HepG2 (cell line): ENCODE measurements at regions of chr15 and their contacts with region 1.

Region 1: DNA sequence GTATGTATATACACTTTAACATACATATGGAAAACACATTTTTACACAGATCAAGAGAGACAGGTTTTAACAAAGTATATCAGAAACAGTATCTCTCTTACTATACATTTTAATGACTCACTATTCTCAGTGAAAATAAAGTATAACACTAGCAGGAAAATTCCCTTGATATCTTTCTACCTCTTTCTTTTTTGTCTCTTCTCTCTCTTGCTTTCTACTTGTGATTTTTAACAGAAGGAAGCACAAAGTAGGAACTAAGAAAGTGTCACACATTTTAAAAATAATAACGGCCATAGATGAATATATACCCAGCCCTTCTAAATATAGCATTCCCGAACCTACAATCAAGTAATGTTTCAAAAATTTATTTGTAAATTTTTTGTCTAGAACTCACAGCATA is 4.8 kb downstream of the DENND4A start:
- DNase-seq: no peak
- ATAC-seq: no peak
- H3K4me3 ChIP-seq: peak overlapping the region in 1 of 3 experiments; percentile 7; a peak in 2 of 6 replicates
- H3K27ac ChIP-seq: peak overlapping the region; percentile 72
- H3K4me1 ChIP-seq: peaks cover 48% of the 10 kb centered on the region
- H3K27me3 ChIP-seq: no peaks in the 10 kb centered on the region; a peak in 1 of 5 replicates
- CTCF ChIP-seq: no peak
- EP300 ChIP-seq: no peak
- POLR2A ChIP-seq: no peak
- RAD21 ChIP-seq: no peak

Region 2: DNA sequence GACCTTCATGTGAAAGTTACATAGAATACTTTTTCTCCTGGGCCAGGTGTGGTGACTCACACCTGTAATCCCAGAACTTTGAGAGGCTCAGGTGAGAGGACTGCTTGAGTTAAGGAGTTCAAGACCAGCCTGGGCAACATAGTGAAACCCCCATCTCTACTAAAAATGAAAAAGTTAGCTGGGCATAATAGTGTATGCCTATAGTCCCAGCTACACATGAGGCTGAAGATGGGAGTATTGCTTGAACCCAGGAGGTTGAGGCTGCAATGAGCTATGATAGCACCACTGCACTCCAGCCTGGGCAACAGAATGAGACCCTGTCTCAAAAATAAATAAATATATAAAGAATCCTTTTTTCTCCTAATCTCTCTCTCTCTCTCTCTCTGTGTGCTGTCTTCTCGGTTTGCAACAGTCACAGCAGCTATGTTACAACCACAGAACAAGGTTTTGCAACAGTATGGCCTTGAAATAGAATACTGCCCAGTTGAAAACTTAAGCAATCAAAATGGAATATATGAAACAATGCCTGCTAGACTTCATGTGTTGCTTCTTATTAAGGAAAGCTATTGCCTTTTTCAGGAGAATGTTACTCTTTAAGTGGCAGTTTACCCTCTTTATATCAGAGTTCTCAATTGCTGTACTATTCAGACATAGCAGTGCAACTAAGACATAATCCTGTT is 17.1 kb after region 1 on chr15:
- CTCF ChIA-PET with region 1: no interaction called
- POLR2A ChIA-PET with region 1: interaction called, 7 read pairs
- in situ Hi-C with region 1: no loop called
- intact Hi-C with region 1: loop called (anchors 1 kb)
- DNase-seq: peak; percentile 91
- ATAC-seq: peak; percentile 94
- H3K4me3 ChIP-seq: peak overlapping the region in 1 of 3 experiments; percentile 21; a peak in 1 of 6 replicates
- H3K27ac ChIP-seq: peak overlapping the region; percentile 64
- H3K4me1 ChIP-seq: peaks cover 55% of the 10 kb centered on the region
- H3K27me3 ChIP-seq: no peaks in the 10 kb centered on the region
- CTCF ChIP-seq: no peak
- EP300 ChIP-seq: peak; percentile 57 to 83; a peak in 3 of 4 replicates
- POLR2A ChIP-seq: no peak
- RAD21 ChIP-seq: no peak

Region 3: GRCh38 chr15:65993236-65993635 is 206.0 kb after region 1 on chr15:
- CTCF ChIA-PET with region 1: no interaction called
- POLR2A ChIA-PET with region 1: no interaction called
- in situ Hi-C with region 1: no loop called
- intact Hi-C with region 1: no loop called
- DNase-seq: no peak
- ATAC-seq: no peak
- H3K4me3 ChIP-seq: no peak overlapping the region
- H3K27ac ChIP-seq: no peak overlapping the region
- H3K4me1 ChIP-seq: no peaks in the 10 kb centered on the region
- H3K27me3 ChIP-seq: peaks cover 7 to 24% of the 10 kb centered on the region in 2 experiments; a peak in 4 of 5 replicates
- CTCF ChIP-seq: no peak
- EP300 ChIP-seq: no peak
- POLR2A ChIP-seq: no peak
- RAD21 ChIP-seq: no peak

Region 4: DNA sequence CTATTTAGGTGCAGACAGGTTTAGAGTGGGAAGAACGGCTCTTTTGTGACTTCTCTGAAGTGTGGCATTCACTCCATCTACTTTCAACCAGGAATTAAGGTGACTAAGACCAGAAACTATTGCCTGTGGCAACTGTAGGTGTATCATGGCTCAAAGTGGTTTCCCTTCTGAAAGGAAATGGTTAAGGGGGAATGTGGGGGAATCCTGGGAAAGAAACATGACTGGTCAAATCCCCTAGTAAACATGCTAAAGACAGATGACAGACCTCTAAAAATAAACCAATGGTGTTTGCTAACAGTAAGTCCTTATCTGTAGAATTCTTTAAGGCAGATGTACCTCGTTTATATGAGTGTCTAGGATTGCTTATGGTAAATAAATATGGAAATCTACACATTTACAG is 409.3 kb after region 1 on chr15:
- CTCF ChIA-PET with region 1: no interaction called
- POLR2A ChIA-PET with region 1: no interaction called
- in situ Hi-C with region 1: no loop called
- intact Hi-C with region 1: no loop called
- DNase-seq: no peak
- ATAC-seq: no peak
- H3K4me3 ChIP-seq: no peak overlapping the region
- H3K27ac ChIP-seq: no peak overlapping the region
- H3K4me1 ChIP-seq: no peaks in the 10 kb centered on the region
- H3K27me3 ChIP-seq: peaks cover 0 to 10% of the 10 kb centered on the region in 2 experiments; a peak in 4 of 5 replicates
- CTCF ChIP-seq: no peak
- EP300 ChIP-seq: no peak
- POLR2A ChIP-seq: no peak
- RAD21 ChIP-seq: no peak